Activated T-helper 1 cell treated with anti-CD3 and anti-CD28 coated beads, Interleukin-12 subunit alpha, Interleukin-12 subunit beta, Interleukin-2, Interleukin-4 antibody, amounts not matched to agents 30 ng/mL and 10 ng/mL and 1 ng/mL, durations not matched to agents 14 hours and 24 hours and 36 hours (primary cell): ENCODE measurements at regions of chr3 and their contacts with region 1.

Region 1: GRCh38 chr3:8416965-8417364 is 84.7 kb upstream of the LMCD1 start:
- DNase-seq: no peak
- H3K4me3 Mint-ChIP-seq: no peak overlapping the region
- H3K27ac Mint-ChIP-seq: no peak overlapping the region
- H3K4me1 Mint-ChIP-seq: no peaks in the 10 kb centered on the region
- H3K27me3 Mint-ChIP-seq: peaks cover 1% of the 10 kb centered on the region

Region 2: DNA sequence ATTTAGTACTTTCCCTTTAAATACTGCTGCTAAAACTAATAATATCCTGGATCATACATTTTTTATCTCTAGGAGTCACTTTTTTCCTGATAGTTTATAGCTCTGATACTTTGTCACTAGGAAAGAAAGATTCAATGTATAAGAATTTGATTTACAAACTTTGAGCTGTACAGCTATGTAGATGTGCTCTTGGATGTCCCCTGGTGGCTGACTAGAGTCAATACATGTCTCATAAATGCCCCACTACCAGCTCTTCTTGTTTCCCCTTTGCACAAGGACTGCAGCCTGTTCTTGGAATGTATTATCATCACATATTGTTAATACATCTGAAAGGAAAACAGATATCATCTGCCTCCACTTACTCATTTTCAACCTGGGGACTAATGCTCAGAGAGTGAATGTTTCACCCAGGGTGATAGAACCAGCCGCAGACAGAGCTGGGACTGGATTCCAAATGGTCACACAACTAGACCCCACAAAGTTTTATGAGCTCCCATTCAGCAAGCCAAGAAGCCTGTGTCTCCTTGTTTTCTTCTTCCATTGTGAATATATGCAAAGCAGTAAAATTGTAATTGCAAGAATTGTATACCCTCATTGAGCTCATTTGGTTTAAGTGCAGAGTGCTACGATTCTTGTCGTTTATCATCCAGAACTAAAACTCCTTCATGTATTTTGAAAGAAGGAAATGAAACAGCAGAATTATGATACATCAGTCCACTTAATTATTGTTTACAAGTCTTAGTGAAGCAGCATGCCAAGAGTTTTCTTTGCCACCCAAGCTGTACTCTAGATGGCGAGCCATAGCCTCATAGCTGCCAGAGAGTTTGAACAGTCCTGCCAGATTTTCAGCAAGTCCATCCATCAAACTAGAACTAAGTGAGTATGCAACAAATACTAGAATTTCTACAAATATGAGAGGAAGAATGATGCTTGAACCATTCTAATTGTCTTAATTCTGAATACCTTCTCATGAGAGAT is 177.0 kb before region 1 on chr3:
- intact Hi-C with region 1: loop called (anchors 2 kb)
- DNase-seq: no peak
- H3K4me3 Mint-ChIP-seq: no peak overlapping the region
- H3K27ac Mint-ChIP-seq: no peak overlapping the region
- H3K4me1 Mint-ChIP-seq: no peaks in the 10 kb centered on the region
- H3K27me3 Mint-ChIP-seq: peaks cover 2% of the 10 kb centered on the region